Calu3 (cell line): ENCODE measurements at regions of chr7 and their contacts with region 1.

Region 1: GRCh38 chr7:47945261-47946001 is 2.8 kb downstream of the PKD1L1 start:
- DNase-seq: peak; percentile 85
- H3K4me3 Mint-ChIP-seq: no peak overlapping the region
- H3K27ac Mint-ChIP-seq: no peak overlapping the region
- H3K4me1 Mint-ChIP-seq: peaks cover 13% of the 10 kb centered on the region
- H3K27me3 Mint-ChIP-seq: no peaks in the 10 kb centered on the region
- CTCF ChIP-seq: peak; percentile 76

Region 2: GRCh38 chr7:47968847-47969774 is 23.7 kb after region 1 on chr7:
- CTCF ChIA-PET with region 1: interaction called, 12 read pairs
- intact Hi-C with region 1: loop called (anchors 1 kb)
- DNase-seq: peak; percentile 86
- H3K4me3 Mint-ChIP-seq: no peak overlapping the region
- H3K27ac Mint-ChIP-seq: no peak overlapping the region
- H3K4me1 Mint-ChIP-seq: peaks cover 24% of the 10 kb centered on the region
- H3K27me3 Mint-ChIP-seq: no peaks in the 10 kb centered on the region
- CTCF ChIP-seq: peak; percentile 89

Region 3: GRCh38 chr7:48109848-48110663 is 164.6 kb after region 1 on chr7:
- CTCF ChIA-PET with region 1: interaction called, 23 read pairs
- intact Hi-C with region 1: loop called (anchors 1 kb)
- DNase-seq: peak; percentile 93
- H3K4me3 Mint-ChIP-seq: no peak overlapping the region
- H3K27ac Mint-ChIP-seq: peak overlapping the region; percentile 45
- H3K4me1 Mint-ChIP-seq: peaks cover 12% of the 10 kb centered on the region
- H3K27me3 Mint-ChIP-seq: no peaks in the 10 kb centered on the region
- CTCF ChIP-seq: peak; percentile 100